Right cardiac atrium (tissue), 5 donors: ENCODE measurements at regions of chr16 and their contacts with region 1.

Region 1: GRCh38 chr16:69917739-69918138 is 33.4 kb upstream of the CLEC18A start:
- DNase-seq: peak in 2 of 3 donors; percentile 68 to 73
- ATAC-seq: peak; percentile 64 to 71
- H3K4me3 ChIP-seq: no peak overlapping the region
- H3K27ac ChIP-seq: no peak overlapping the region
- H3K4me1 ChIP-seq: no peaks in the 10 kb centered on the region
- H3K27me3 ChIP-seq: no peaks in the 10 kb centered on the region

Region 2: GRCh38 chr16:69554495-69554894 is 363.2 kb before region 1 on chr16:
- intact Hi-C with region 1: no loop called
- DNase-seq: no peak
- ATAC-seq: no peak
- H3K4me3 ChIP-seq: no peak overlapping the region
- H3K27ac ChIP-seq: no peak overlapping the region
- H3K4me1 ChIP-seq: no peaks in the 10 kb centered on the region
- H3K27me3 ChIP-seq: no peaks in the 10 kb centered on the region

Region 3: DNA sequence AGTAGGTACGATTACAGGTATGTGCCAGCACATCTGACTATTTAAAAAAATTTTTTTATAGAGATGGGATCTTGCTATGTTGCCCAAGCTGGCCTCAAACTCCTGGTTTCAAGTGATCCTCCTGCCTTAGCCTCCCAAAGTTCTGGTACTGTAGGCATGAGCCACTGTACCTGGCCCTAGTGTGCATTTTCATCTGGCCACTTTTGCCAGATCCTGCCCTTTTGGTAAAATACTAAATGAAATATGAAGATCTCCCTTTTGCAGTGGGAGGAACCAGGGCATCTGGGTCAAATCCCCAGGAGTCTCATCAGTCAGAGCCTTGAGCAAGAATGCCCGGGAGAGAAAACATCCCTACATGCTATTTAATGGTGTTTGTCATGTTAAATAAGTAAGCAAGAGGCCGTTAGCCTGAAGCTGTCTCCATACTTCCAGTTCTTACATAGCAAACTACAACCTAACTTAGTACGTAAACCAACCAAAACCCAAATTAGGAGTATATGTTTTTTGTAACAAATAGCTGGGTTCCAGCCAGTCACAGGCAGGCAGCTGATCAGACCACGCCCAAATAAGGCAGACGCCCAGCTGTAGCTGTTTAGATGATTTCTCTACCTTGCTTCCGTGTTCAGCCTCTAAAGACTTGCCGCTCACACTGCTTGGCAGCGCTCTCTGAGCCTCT is 13.1 kb before region 1 on chr16:
- intact Hi-C with region 1: loop called in 1 of 4 experiments (anchors 2 kb)
- DNase-seq: no peak
- ATAC-seq: no peak
- H3K4me3 ChIP-seq: no peak overlapping the region
- H3K27ac ChIP-seq: no peak overlapping the region
- H3K4me1 ChIP-seq: no peaks in the 10 kb centered on the region
- H3K27me3 ChIP-seq: no peaks in the 10 kb centered on the region

Region 4: GRCh38 chr16:70254095-70254964 is 336.6 kb after region 1 on chr16:
- intact Hi-C with region 1: no loop called
- DNase-seq: no peak
- ATAC-seq: no peak
- H3K4me3 ChIP-seq: no peak overlapping the region
- H3K27ac ChIP-seq: no peak overlapping the region
- H3K4me1 ChIP-seq: no peaks in the 10 kb centered on the region
- H3K27me3 ChIP-seq: no peaks in the 10 kb centered on the region

Region 5: GRCh38 chr16:70638814-70639792 is 721.4 kb after region 1 on chr16:
- intact Hi-C with region 1: no loop called
- DNase-seq: peak; percentile 18 to 47 (median 35)
- ATAC-seq: peak; percentile 41 to 75
- H3K4me3 ChIP-seq: no peak overlapping the region
- H3K27ac ChIP-seq: peak overlapping the region; percentile 29
- H3K4me1 ChIP-seq: peaks cover 2% of the 10 kb centered on the region
- H3K27me3 ChIP-seq: no peaks in the 10 kb centered on the region